ENCODE measurements at regions of chr11 and their contacts with region 1.

Region 1: GRCh38 chr11:66022401-66023185 is 3.7 kb downstream of the CATSPER1 start:
- DNase-seq: peak; percentile 63 to 80 (median 71)
- H3K4me3 ChIP-seq: no peak overlapping the region
- H3K4me3 Mint-ChIP-seq: peak overlapping the region in 5 of 7 donors; percentile 27 to 51 (median 28)
- H3K27ac ChIP-seq: no peak overlapping the region
- H3K27ac Mint-ChIP-seq: no peak overlapping the region
- H3K4me1 ChIP-seq: peaks cover 7% of the 10 kb centered on the region
- H3K4me1 Mint-ChIP-seq: peaks cover 5 to 9% (median 6%) of the 10 kb centered on the region in 3 donors
- H3K27me3 ChIP-seq: no peaks in the 10 kb centered on the region
- H3K27me3 Mint-ChIP-seq: peaks cover 3 to 8% of the 10 kb centered on the region in 2 donors

Region 2: GRCh38 chr11:66011239-66011784 is 11.3 kb before region 1 on chr11:
- CTCF ChIA-PET with region 1: interaction called, 22 read pairs
- POLR2A ChIA-PET with region 1: no interaction called
- DNase-seq: no peak
- H3K4me3 ChIP-seq: no peak overlapping the region
- H3K4me3 Mint-ChIP-seq: no peak overlapping the region
- H3K27ac ChIP-seq: no peak overlapping the region
- H3K27ac Mint-ChIP-seq: no peak overlapping the region
- H3K4me1 ChIP-seq: no peaks in the 10 kb centered on the region
- H3K4me1 Mint-ChIP-seq: no peaks in the 10 kb centered on the region
- H3K27me3 ChIP-seq: peaks cover 16% of the 10 kb centered on the region
- H3K27me3 Mint-ChIP-seq: peaks cover 16 to 28% of the 10 kb centered on the region in 2 donors

Region 3: GRCh38 chr11:66081505-66081904 is 58.9 kb after region 1 on chr11:
- CTCF ChIA-PET with region 1: no interaction called
- POLR2A ChIA-PET with region 1: no interaction called
- DNase-seq: peak; percentile 59 to 88 (median 74)
- H3K4me3 ChIP-seq: peak overlapping the region; percentile 37
- H3K4me3 Mint-ChIP-seq: peak overlapping the region; percentile 84 to 95 (median 93)
- H3K27ac ChIP-seq: peak overlapping the region; percentile 52
- H3K27ac Mint-ChIP-seq: peak overlapping the region; percentile 94 to 99 (median 99)
- H3K4me1 ChIP-seq: peaks cover 90% of the 10 kb centered on the region
- H3K4me1 Mint-ChIP-seq: peaks cover 83 to 90% (median 86%) of the 10 kb centered on the region in 3 donors
- H3K27me3 ChIP-seq: no peaks in the 10 kb centered on the region
- H3K27me3 Mint-ChIP-seq: peaks cover 0 to 2% of the 10 kb centered on the region in 2 donors